ACHN (cell line): ENCODE measurements at regions of chr12 and their contacts with region 1.

Region 1: GRCh38 chr12:106386813-106387535 is 29.4 kb downstream of the POLR3B start:
- DNase-seq: no peak

Region 2: GRCh38 chr12:106205208-106206071 is 181.5 kb before region 1 on chr12:
- in situ Hi-C with region 1: no loop called
- DNase-seq: peak; percentile 20

Region 3: GRCh38 chr12:106841510-106842302 is 454.7 kb after region 1 on chr12:
- in situ Hi-C with region 1: loop called (anchors 25 kb)
- DNase-seq: peak; percentile 71

Region 4: DNA sequence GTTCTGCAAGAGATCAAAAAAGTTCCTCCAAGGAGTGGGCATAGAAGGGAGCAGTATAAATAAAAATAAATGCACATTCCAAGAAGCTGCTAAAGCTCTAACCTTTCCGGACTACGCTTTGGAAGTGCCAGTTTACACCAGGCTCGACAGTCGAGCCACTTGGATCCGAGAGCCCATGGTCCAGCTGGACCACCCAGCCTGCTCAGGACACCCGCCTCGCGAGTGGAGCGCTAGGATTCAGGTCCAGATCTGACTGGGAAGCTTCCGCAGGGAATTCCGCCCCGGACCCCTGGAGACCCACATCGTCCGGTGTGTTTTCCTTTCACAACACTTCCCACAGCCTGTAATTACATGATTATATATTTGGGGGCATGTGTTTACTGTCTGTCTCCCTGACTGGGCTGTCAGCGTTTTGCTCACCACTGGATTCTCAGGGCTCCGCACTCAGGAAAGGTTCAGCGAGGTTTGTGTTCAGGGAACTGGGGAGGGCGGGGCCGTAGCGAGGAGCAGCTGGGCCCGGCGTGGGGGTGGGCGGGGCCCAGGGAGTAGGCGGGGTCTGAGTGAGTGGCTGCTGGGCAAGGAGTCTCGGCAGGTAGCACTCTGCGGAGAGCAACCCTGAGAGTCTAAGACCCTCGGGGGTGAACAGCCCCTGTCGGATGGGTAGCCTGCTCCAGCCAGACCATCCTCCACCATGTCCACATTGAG is 516.4 kb after region 1 on chr12:
- in situ Hi-C with region 1: loop called (anchors 25 kb)
- DNase-seq: peak; percentile 74